Mammary epithelial cell (primary cell): ENCODE measurements at regions of chr3 and their contacts with region 1.

Region 1: DNA sequence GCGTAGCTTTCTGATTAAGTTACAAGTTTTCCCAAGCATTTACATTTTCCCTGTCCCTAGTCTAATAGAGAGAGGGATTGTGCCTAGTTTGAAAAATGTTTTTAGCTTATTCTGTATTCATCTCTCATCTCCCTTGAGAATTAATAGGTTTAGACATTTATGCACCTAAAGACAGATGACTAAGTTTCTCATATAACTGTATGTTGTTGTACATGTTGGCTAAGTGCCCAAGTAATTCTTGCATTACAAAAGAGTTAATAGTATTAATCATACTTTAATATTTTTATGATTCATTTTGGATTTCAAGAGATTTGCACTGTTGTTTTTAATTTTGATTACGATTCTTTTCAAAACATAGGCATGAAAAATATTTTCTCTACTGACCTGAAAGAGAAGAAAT is 109.0 kb upstream of the TBL1XR1 start:
- DNase-seq: peak; percentile 82
- H3K4me3 ChIP-seq: no peak overlapping the region
- H3K27ac ChIP-seq: peak overlapping the region; percentile 44
- H3K4me1 ChIP-seq: peaks cover 10% of the 10 kb centered on the region
- H3K27me3 ChIP-seq: no peaks in the 10 kb centered on the region
- CTCF ChIP-seq: no peak

Region 2: DNA sequence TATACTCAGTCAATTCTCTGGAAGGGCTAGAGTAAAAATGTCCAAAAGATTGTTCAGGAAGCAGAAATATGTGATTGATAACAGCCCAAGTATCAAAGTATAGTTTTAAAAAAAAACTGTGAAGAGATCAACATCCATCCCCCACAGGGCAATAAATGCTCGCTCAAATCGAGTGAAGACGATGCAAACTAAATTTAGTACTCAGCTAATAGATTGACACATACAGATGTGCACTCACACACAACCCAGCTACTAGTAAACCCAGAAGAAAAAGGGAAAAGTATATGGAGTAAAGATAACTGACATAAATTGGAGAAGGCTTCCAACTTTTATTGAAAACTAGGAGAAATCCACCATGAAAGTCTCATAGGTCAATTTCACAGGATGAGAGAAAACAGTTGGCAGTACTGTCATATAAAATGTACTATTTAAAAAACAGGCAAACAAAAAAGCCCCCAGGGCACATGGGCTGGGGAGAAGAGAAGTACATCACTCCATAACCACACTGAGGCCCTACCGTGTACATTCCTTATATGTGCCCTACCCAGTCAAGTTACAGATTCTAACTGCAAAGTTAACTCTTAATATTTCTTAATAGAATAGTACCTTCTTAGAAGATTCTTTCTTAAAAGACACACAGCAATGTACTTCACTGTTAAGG is 234.6 kb before region 1 on chr3:
- CTCF ChIA-PET with region 1: interaction called, 13 read pairs
- dilution Hi-C with region 1: no loop called
- in situ Hi-C with region 1: no loop called
- intact Hi-C with region 1: no loop called
- DNase-seq: no peak
- H3K4me3 ChIP-seq: no peak overlapping the region
- H3K27ac ChIP-seq: no peak overlapping the region
- H3K4me1 ChIP-seq: no peaks in the 10 kb centered on the region
- H3K27me3 ChIP-seq: no peaks in the 10 kb centered on the region
- CTCF ChIP-seq: no peak